ENCODE measurements at regions of chr9 and their contacts with region 1.

Region 1: GRCh38 chr9:96566498-96567207 is 53.0 kb downstream of the CDC14B start:
- DNase-seq: peak; percentile 38 to 86 (median 76)
- H3K4me3 ChIP-seq: peak overlapping the region; percentile 53 to 92 (median 78)
- H3K27ac ChIP-seq: peak overlapping the region; percentile 73 to 99 (median 97)
- H3K27me3 ChIP-seq: no peaks in the 10 kb centered on the region
- CTCF ChIP-seq: peak; percentile 40 to 87 (median 72)

Region 2: DNA sequence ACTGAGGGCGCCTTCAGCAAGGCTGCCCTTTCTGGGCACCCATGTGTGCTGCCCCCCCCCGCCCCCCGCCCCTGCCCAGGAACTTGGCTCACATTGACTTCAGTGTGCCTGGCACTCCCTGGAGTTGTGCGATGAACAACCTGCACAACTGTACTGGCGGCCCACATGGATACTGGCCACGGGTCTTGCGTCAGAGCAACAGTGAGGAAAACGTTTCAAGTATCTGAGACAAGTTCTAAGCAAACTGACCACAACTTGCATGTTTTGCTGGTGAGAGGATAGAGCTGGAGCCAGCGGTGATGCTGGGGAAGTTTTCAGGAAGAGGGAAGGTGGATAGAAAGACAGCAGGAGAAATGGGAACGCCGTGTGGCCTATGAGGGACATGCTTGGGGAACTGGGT is 71.3 kb before region 1 on chr9:
- intact Hi-C with region 1: loop called in 1 of 2 experiments (anchors 5 kb)
- DNase-seq: no peak
- H3K4me3 ChIP-seq: no peak overlapping the region
- H3K27ac ChIP-seq: peak overlapping the region in 6 of 59 donors; percentile 2 to 61 (median 33)
- H3K27me3 ChIP-seq: no peaks in the 10 kb centered on the region
- CTCF ChIP-seq: no peak

Region 3: DNA sequence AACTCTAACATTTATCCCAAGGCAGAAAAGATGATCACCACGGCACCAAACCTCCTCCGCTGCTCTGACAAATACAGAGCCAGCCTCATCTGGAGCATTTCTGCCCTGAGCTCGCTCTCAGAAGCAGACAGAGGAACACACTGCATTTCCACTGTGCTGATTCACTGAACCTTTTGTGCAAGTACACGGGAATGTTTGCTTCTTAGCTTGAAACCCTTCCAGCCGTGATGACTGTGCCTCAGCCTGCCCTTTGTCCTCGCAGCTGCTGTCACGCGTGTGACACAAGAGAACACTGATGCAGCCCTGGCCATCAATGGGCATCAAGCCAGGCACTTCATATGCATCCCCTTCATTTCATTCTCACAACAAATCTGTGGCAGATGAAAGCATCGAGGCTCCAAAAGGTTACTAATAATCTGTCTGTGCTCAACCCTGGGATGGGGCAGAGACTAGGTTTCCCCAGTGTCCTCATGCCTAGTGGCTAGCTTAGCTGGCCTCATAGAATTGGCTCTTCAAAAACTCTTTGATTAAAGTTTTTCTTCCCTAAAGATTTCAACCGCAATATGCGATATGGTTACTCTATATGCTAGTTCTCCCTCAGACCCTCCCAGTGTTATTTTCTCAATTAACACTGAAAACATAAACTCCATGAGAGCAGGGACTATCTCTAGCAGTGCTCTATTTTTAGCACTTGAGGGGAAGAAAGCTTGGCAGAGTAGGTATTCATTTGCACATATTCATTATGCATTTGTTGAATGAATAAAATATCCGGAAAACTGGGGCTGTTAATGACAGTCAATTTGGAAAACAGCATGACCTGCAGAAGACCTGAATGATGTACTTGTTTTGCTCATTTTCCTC is 45.7 kb after region 1 on chr9:
- intact Hi-C with region 1: loop called in 1 of 2 experiments (anchors 2 kb)
- DNase-seq: peak; percentile 35 to 94 (median 88)
- H3K4me3 ChIP-seq: peak overlapping the region in 57 of 59 donors; percentile 6 to 61 (median 41)
- H3K27ac ChIP-seq: peak overlapping the region; percentile 70 to 99 (median 94)
- H3K27me3 ChIP-seq: no peaks in the 10 kb centered on the region
- CTCF ChIP-seq: peak in 9 of 56 donors; percentile 9 to 37 (median 26)